Lower lobe of right lung (tissue), 2 donors: ENCODE measurements at regions of chr13 and their contacts with region 1.

Region 1: DNA sequence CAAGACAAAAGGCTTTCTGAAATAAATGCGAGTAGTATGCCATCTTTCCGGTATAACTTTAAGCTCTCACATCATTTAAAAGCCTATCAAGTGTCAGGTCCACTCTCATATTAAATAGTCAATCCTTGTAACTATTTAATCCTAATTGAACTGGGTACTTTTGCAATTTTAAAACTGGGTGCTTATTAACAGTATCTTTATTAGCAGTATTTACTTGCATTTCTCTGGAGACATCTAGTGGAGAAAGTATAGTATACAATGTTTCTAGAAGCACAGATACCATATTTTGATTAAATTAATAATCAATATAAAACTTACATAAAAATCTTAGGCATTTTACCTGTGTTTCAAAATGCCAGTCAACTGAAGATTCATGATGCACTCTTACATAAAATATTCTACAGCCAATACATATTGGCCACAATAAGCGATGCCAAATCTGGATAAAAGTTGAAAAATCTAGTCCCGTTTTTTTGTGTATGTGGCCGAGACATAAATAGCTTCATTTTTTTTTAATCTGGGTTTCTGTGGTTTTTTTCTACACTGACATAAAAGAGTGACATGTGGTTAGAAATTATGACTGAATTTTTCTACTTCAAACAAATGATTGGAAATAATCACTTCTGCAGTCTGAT is 4.3 kb upstream of the POSTN start:
- DNase-seq: no peak
- ATAC-seq: no peak
- H3K4me3 ChIP-seq: no peak overlapping the region
- H3K27ac ChIP-seq: no peak overlapping the region
- H3K4me1 ChIP-seq: no peaks in the 10 kb centered on the region
- H3K27me3 ChIP-seq: no peaks in the 10 kb centered on the region
- CTCF ChIP-seq: peak; percentile 55

Region 2: DNA sequence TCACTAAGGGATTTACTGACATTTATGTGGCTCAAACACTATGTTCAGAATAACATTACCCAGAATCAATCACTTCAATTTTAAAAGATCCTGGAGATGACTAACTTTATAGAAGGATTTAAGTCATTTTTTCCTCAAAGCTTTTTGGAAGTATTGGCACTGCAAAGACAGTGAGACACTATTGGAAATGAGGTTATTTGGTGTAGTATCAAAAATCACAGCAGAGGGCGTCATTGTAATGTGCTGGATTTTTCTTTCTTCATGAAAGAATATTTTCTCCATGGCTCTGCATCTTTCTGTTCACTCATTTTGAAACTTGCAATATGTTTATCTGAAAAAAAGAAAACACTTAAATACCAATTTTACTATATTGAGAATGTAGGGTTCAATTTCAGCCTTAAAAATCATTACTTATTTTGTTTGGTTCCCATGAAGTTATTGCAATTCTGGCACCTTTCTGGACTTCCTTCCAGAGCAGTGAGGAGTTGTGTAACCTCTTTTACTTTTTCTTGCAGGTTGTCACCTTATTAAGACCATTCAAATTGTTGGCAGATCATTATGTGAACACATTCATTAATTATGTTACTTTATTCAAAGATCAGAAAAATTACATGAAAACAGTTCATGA is 493.7 kb before region 1 on chr13:
- intact Hi-C with region 1: loop called (anchors 10 kb)
- DNase-seq: no peak
- ATAC-seq: no peak
- H3K4me3 ChIP-seq: no peak overlapping the region
- H3K27ac ChIP-seq: no peak overlapping the region
- H3K4me1 ChIP-seq: no peaks in the 10 kb centered on the region
- H3K27me3 ChIP-seq: no peaks in the 10 kb centered on the region
- CTCF ChIP-seq: peak; percentile 56

Region 3: GRCh38 chr13:37295071-37295470 is 307.8 kb before region 1 on chr13:
- intact Hi-C with region 1: no loop called
- DNase-seq: no peak
- ATAC-seq: peak in 1 of 2 donors; percentile 48
- H3K4me3 ChIP-seq: no peak overlapping the region
- H3K27ac ChIP-seq: no peak overlapping the region
- H3K4me1 ChIP-seq: no peaks in the 10 kb centered on the region
- H3K27me3 ChIP-seq: no peaks in the 10 kb centered on the region
- CTCF ChIP-seq: no peak